B cell (primary cell): ENCODE measurements at regions of chr5 and their contacts with region 1.

Region 1: DNA sequence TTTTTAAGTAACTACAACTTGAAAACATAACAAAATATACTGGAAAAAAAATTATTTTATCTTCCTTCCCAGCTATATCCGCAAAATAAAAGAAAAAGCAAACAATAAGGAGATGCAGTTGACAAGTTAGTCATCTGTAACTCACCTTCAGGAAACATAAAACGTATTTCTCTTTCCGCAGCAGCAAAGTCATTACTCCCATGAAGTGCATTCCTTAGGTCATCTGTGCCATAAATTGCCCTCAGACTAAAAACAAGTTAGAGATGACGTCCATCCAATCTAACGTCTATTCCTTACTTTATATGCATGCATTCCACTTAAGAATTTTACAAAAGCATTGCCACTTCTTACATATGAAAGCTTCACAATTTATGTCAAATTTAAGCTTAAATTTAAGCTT is 10.9 kb downstream of the NME5 start:
- DNase-seq: no peak
- ATAC-seq: no peak
- H3K4me3 ChIP-seq: no peak overlapping the region
- H3K4me3 Mint-ChIP-seq: no peak overlapping the region
- H3K27ac ChIP-seq: no peak overlapping the region
- H3K27ac Mint-ChIP-seq: no peak overlapping the region
- H3K4me1 ChIP-seq: peaks cover 0 to 4% of the 10 kb centered on the region in 2 donors
- H3K4me1 Mint-ChIP-seq: peaks cover 1% of the 10 kb centered on the region
- H3K27me3 ChIP-seq: peaks cover 0 to 7% (median 0%) of the 10 kb centered on the region in 4 experiments
- H3K27me3 Mint-ChIP-seq: peaks cover 17% of the 10 kb centered on the region
- CTCF ChIP-seq: no peak

Region 2: GRCh38 chr5:137808503-137809205 is 319.7 kb before region 1 on chr5:
- CTCF ChIA-PET with region 1: no interaction called
- POLR2A ChIA-PET with region 1: no interaction called
- intact Hi-C with region 1: no loop called
- DNase-seq: no peak
- ATAC-seq: no peak
- H3K4me3 ChIP-seq: no peak overlapping the region
- H3K4me3 Mint-ChIP-seq: no peak overlapping the region
- H3K27ac ChIP-seq: no peak overlapping the region
- H3K27ac Mint-ChIP-seq: no peak overlapping the region
- H3K4me1 ChIP-seq: peaks cover 8 to 12% of the 10 kb centered on the region in 2 donors
- H3K4me1 Mint-ChIP-seq: peaks cover 14% of the 10 kb centered on the region
- H3K27me3 ChIP-seq: no peaks in the 10 kb centered on the region
- H3K27me3 Mint-ChIP-seq: no peaks in the 10 kb centered on the region
- CTCF ChIP-seq: no peak

Region 3: DNA sequence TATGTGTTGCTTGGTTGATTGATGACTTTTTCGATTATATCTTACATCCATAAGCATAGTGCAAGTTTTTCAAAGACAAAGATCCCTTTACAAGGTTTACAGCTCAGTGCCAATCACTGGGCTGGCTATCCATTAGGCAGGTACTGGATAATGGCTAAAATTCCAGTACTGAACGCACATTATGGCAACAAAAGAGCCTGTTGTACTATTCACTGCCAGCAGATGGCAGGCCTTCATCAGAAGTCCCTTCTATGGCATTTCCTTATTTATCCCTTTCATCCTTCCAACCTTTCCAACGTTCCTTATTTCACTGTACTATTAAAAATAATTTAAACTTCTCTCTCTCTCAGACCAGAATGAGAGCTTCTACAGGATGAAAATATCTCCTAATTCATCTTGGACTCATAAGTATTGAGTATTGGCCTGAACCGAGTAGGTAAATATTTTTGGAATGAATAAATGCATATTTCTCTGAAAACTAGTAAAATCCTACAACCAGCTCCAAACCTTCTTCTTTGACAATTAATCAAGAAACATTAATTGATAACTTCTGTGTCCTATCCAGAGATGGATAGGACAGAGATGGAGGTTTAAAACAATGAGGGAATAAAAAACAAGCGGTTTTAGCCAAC is 51.2 kb before region 1 on chr5:
- CTCF ChIA-PET with region 1: interaction called, 278 read pairs
- POLR2A ChIA-PET with region 1: interaction called, 4 read pairs
- intact Hi-C with region 1: loop called (anchors 1 kb)
- DNase-seq: peak; percentile 71
- ATAC-seq: peak; percentile 53
- H3K4me3 ChIP-seq: no peak overlapping the region
- H3K4me3 Mint-ChIP-seq: no peak overlapping the region
- H3K27ac ChIP-seq: no peak overlapping the region
- H3K27ac Mint-ChIP-seq: no peak overlapping the region
- H3K4me1 ChIP-seq: peaks cover 3 to 15% of the 10 kb centered on the region in 2 donors
- H3K4me1 Mint-ChIP-seq: peaks cover 10% of the 10 kb centered on the region
- H3K27me3 ChIP-seq: no peaks in the 10 kb centered on the region
- H3K27me3 Mint-ChIP-seq: no peaks in the 10 kb centered on the region
- CTCF ChIP-seq: peak; percentile 99

Region 4: GRCh38 chr5:138102454-138103318 is 25.6 kb before region 1 on chr5:
- CTCF ChIA-PET with region 1: interaction called, 17 read pairs
- POLR2A ChIA-PET with region 1: no interaction called
- intact Hi-C with region 1: no loop called
- DNase-seq: peak; percentile 69
- ATAC-seq: peak; percentile 95
- H3K4me3 ChIP-seq: no peak overlapping the region
- H3K4me3 Mint-ChIP-seq: peak overlapping the region; percentile 65
- H3K27ac ChIP-seq: peak overlapping the region in 1 of 2 donors; percentile 32
- H3K27ac Mint-ChIP-seq: peak overlapping the region; percentile 70
- H3K4me1 ChIP-seq: peaks cover 13 to 16% of the 10 kb centered on the region in 2 donors
- H3K4me1 Mint-ChIP-seq: peaks cover 24% of the 10 kb centered on the region
- H3K27me3 ChIP-seq: no peaks in the 10 kb centered on the region
- H3K27me3 Mint-ChIP-seq: peaks cover 13% of the 10 kb centered on the region
- CTCF ChIP-seq: no peak

Region 5: GRCh38 chr5:138138949-138139780 is 10.8 kb after region 1 on chr5 and contains the start of gene NME5:
- CTCF ChIA-PET with region 1: interaction called, 13 read pairs
- POLR2A ChIA-PET with region 1: no interaction called
- intact Hi-C with region 1: no loop called
- DNase-seq: peak; percentile 33
- ATAC-seq: no peak
- H3K4me3 ChIP-seq: peak within 1 kb of the TSS in 3 of 5 experiments; percentile 21 to 33 (median 23)
- H3K4me3 Mint-ChIP-seq: peak within 1 kb of the TSS; percentile 71
- H3K27ac ChIP-seq: no peak within 1 kb of the TSS
- H3K27ac Mint-ChIP-seq: no peak within 1 kb of the TSS
- H3K4me1 ChIP-seq: peaks cover 5 to 8% of the 10 kb centered on the region in 2 donors
- H3K4me1 Mint-ChIP-seq: peaks cover 9% of the 10 kb centered on the region
- H3K27me3 ChIP-seq: peaks cover 0 to 6% (median 5%) of the 10 kb centered on the region in 4 experiments
- H3K27me3 Mint-ChIP-seq: peaks cover 16% of the 10 kb centered on the region
- CTCF ChIP-seq: no peak
- total RNA-seq, gene NME5: not detected in 2 replicates

Region 6: GRCh38 chr5:139167952-139168730 is 1039.8 kb after region 1 on chr5:
- CTCF ChIA-PET with region 1: no interaction called
- POLR2A ChIA-PET with region 1: no interaction called
- intact Hi-C with region 1: no loop called
- DNase-seq: no peak
- ATAC-seq: no peak
- H3K4me3 ChIP-seq: no peak overlapping the region
- H3K4me3 Mint-ChIP-seq: no peak overlapping the region
- H3K27ac ChIP-seq: no peak overlapping the region
- H3K27ac Mint-ChIP-seq: no peak overlapping the region
- H3K4me1 ChIP-seq: no peaks in the 10 kb centered on the region
- H3K4me1 Mint-ChIP-seq: peaks cover 3% of the 10 kb centered on the region
- H3K27me3 ChIP-seq: no peaks in the 10 kb centered on the region
- H3K27me3 Mint-ChIP-seq: no peaks in the 10 kb centered on the region
- CTCF ChIP-seq: no peak